ENCODE measurements at regions of chr3 and their contacts with region 1.

Region 1: DNA sequence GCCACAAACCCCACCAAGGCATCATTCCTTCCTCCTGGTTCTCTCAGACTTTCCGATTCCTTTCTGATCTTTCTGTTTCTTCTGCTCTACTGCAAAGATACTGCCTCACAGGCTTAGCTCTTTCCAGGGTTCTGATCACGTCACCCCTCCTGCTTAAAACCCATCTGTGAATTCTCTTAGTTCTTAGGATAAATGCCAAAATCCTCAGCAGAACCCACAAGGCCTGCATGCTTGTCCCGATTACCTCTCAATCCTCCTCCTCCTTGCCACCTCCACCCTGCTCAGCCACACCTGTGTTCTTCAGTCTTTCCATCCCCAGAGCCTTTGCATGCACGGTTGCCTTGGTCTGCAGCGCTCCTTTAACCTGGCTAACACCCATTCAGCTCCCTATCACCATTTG is 84.0 kb downstream of the SRGAP3 start:
- DNase-seq: no peak
- ATAC-seq: no peak
- H3K4me3 ChIP-seq: no peak overlapping the region
- H3K4me3 Mint-ChIP-seq: no peak overlapping the region
- H3K27ac ChIP-seq: no peak overlapping the region
- H3K27ac Mint-ChIP-seq: no peak overlapping the region
- H3K4me1 ChIP-seq: peaks cover 19 to 25% of the 10 kb centered on the region in 2 experiments
- H3K4me1 Mint-ChIP-seq: peaks cover 24 to 31% (median 27%) of the 10 kb centered on the region in 3 donors
- H3K27me3 ChIP-seq: no peaks in the 10 kb centered on the region
- H3K27me3 Mint-ChIP-seq: no peaks in the 10 kb centered on the region

Region 2: GRCh38 chr3:9211155-9211950 is 45.9 kb after region 1 on chr3:
- CTCF ChIA-PET with region 1: no interaction called
- POLR2A ChIA-PET with region 1: no interaction called
- DNase-seq: no peak
- ATAC-seq: no peak
- H3K4me3 ChIP-seq: no peak overlapping the region
- H3K4me3 Mint-ChIP-seq: no peak overlapping the region
- H3K27ac ChIP-seq: no peak overlapping the region
- H3K27ac Mint-ChIP-seq: no peak overlapping the region
- H3K4me1 ChIP-seq: no peaks in the 10 kb centered on the region
- H3K4me1 Mint-ChIP-seq: no peaks in the 10 kb centered on the region
- H3K27me3 ChIP-seq: peaks cover 0 to 3% of the 10 kb centered on the region in 2 experiments
- H3K27me3 Mint-ChIP-seq: peaks cover 0 to under 1% of the 10 kb centered on the region in 2 donors

Region 3: GRCh38 chr3:9497821-9498565 is 332.6 kb after region 1 on chr3:
- CTCF ChIA-PET with region 1: no interaction called
- POLR2A ChIA-PET with region 1: interaction called in 1 of 2 experiments, 15 read pairs
- DNase-seq: no peak
- ATAC-seq: no peak
- H3K4me3 ChIP-seq: no peak overlapping the region
- H3K4me3 Mint-ChIP-seq: no peak overlapping the region
- H3K27ac ChIP-seq: no peak overlapping the region
- H3K27ac Mint-ChIP-seq: no peak overlapping the region
- H3K4me1 ChIP-seq: peaks cover 0 to 17% of the 10 kb centered on the region in 2 experiments
- H3K4me1 Mint-ChIP-seq: peaks cover 5 to 15% (median 7%) of the 10 kb centered on the region in 3 donors
- H3K27me3 ChIP-seq: peaks cover 0 to 46% of the 10 kb centered on the region in 2 experiments
- H3K27me3 Mint-ChIP-seq: peaks cover 26 to 32% of the 10 kb centered on the region in 2 donors